ENCODE measurements at regions of chrX and their contacts with region 1.

Region 1: GRCh38 chrX:48957827-48958634 is 624 bp upstream of the OTUD5 start:
- DNase-seq: peak; percentile 89 to 98 (median 95)
- H3K4me3 ChIP-seq: peak overlapping the region; percentile 88
- H3K4me3 Mint-ChIP-seq: peak overlapping the region; percentile 97 to 99 (median 99)
- H3K27ac ChIP-seq: peak overlapping the region; percentile 100
- H3K27ac Mint-ChIP-seq: peak overlapping the region; percentile 100
- H3K4me1 ChIP-seq: peaks cover 42% of the 10 kb centered on the region
- H3K4me1 Mint-ChIP-seq: peaks cover 26 to 55% (median 36%) of the 10 kb centered on the region in 3 donors
- H3K27me3 ChIP-seq: no peaks in the 10 kb centered on the region
- H3K27me3 Mint-ChIP-seq: peaks cover 0 to 9% of the 10 kb centered on the region in 2 donors

Region 2: GRCh38 chrX:48794911-48795501 is 163.0 kb before region 1 on chrX:
- CTCF ChIA-PET with region 1: no interaction called
- POLR2A ChIA-PET with region 1: no interaction called
- DNase-seq: no peak
- H3K4me3 ChIP-seq: no peak overlapping the region
- H3K4me3 Mint-ChIP-seq: no peak overlapping the region
- H3K27ac ChIP-seq: no peak overlapping the region
- H3K27ac Mint-ChIP-seq: no peak overlapping the region
- H3K4me1 ChIP-seq: no peaks in the 10 kb centered on the region
- H3K4me1 Mint-ChIP-seq: peaks cover 0 to under 1% (median 0%) of the 10 kb centered on the region in 3 donors
- H3K27me3 ChIP-seq: no peaks in the 10 kb centered on the region
- H3K27me3 Mint-ChIP-seq: peaks cover 0 to 10% of the 10 kb centered on the region in 2 donors

Region 3: GRCh38 chrX:48897621-48898306 is 60.3 kb before region 1 on chrX and contains the starts of genes PQBP1 and TIMM17B:
- CTCF ChIA-PET with region 1: no interaction called
- POLR2A ChIA-PET with region 1: interaction called, 11 read pairs
- DNase-seq: peak; percentile 81 to 93 (median 89)
- H3K4me3 ChIP-seq: peak within 1 kb of the TSS; percentile 91
- H3K4me3 Mint-ChIP-seq: peak within 1 kb of the TSS; percentile 84 to 96 (median 89)
- H3K27ac ChIP-seq: peak within 1 kb of the TSS; percentile 93
- H3K27ac Mint-ChIP-seq: peak within 1 kb of the TSS; percentile 90 to 99 (median 95)
- H3K4me1 ChIP-seq: peaks cover 24% of the 10 kb centered on the region
- H3K4me1 Mint-ChIP-seq: peaks cover 18 to 38% (median 27%) of the 10 kb centered on the region in 3 donors
- H3K27me3 ChIP-seq: no peaks in the 10 kb centered on the region
- H3K27me3 Mint-ChIP-seq: peaks cover 0 to 2% of the 10 kb centered on the region in 2 donors
- total RNA-seq, gene PQBP1: 101 to 106 TPM
- total RNA-seq, gene TIMM17B: 87.5 to 93.6 TPM

Region 4: GRCh38 chrX:48918643-48919340 is 39.2 kb before region 1 on chrX and contains the start of gene PIM2:
- CTCF ChIA-PET with region 1: interaction called, 4 read pairs
- POLR2A ChIA-PET with region 1: interaction called, 10 read pairs
- DNase-seq: peak; percentile 83 to 96 (median 93)
- H3K4me3 ChIP-seq: peak within 1 kb of the TSS; percentile 94
- H3K4me3 Mint-ChIP-seq: peak within 1 kb of the TSS; percentile 95 to 98 (median 96)
- H3K27ac ChIP-seq: peak within 1 kb of the TSS; percentile 95
- H3K27ac Mint-ChIP-seq: peak within 1 kb of the TSS; percentile 74 to 97 (median 94)
- H3K4me1 ChIP-seq: peaks cover 52% of the 10 kb centered on the region
- H3K4me1 Mint-ChIP-seq: peaks cover 62 to 78% (median 66%) of the 10 kb centered on the region in 3 donors
- H3K27me3 ChIP-seq: no peaks in the 10 kb centered on the region
- H3K27me3 Mint-ChIP-seq: peaks cover 0 to 3% of the 10 kb centered on the region in 2 donors
- total RNA-seq, gene PIM2: 269 to 273 TPM

Region 5: GRCh38 chrX:48937054-48937907 is 20.8 kb before region 1 on chrX:
- CTCF ChIA-PET with region 1: interaction called, 7 read pairs
- POLR2A ChIA-PET with region 1: interaction called, 17 read pairs
- DNase-seq: peak; percentile 72 to 95 (median 92)
- H3K4me3 ChIP-seq: peak overlapping the region; percentile 58
- H3K4me3 Mint-ChIP-seq: peak overlapping the region; percentile 74 to 93 (median 86)
- H3K27ac ChIP-seq: peak overlapping the region; percentile 73
- H3K27ac Mint-ChIP-seq: peak overlapping the region; percentile 93 to 99 (median 94)
- H3K4me1 ChIP-seq: peaks cover 83% of the 10 kb centered on the region
- H3K4me1 Mint-ChIP-seq: peaks cover 79 to 92% (median 85%) of the 10 kb centered on the region in 3 donors
- H3K27me3 ChIP-seq: no peaks in the 10 kb centered on the region
- H3K27me3 Mint-ChIP-seq: peaks cover 0 to 5% of the 10 kb centered on the region in 2 donors

Region 6: GRCh38 chrX:49067283-49068120 is 109.5 kb after region 1 on chrX:
- CTCF ChIA-PET with region 1: no interaction called
- POLR2A ChIA-PET with region 1: no interaction called
- DNase-seq: no peak
- H3K4me3 ChIP-seq: no peak overlapping the region
- H3K4me3 Mint-ChIP-seq: no peak overlapping the region
- H3K27ac ChIP-seq: no peak overlapping the region
- H3K27ac Mint-ChIP-seq: peak overlapping the region in 2 of 8 donors; percentile 6 to 72
- H3K4me1 ChIP-seq: no peaks in the 10 kb centered on the region
- H3K4me1 Mint-ChIP-seq: peaks cover 0 to 3% (median 0%) of the 10 kb centered on the region in 3 donors
- H3K27me3 ChIP-seq: no peaks in the 10 kb centered on the region
- H3K27me3 Mint-ChIP-seq: peaks cover 0 to 4% of the 10 kb centered on the region in 2 donors

Measured in CD8-positive, alpha-beta memory T cell (primary cell).